Breast epithelium (tissue), 4 donors: ENCODE measurements at regions of chr1 and their contacts with region 1.

Region 1: GRCh38 chr1:161305867-161306519 is 3.8 kb downstream of the MPZ start:
- DNase-seq: peak; percentile 74 to 75
- H3K4me3 ChIP-seq: peak overlapping the region; percentile 57 to 88 (median 82)
- H3K27ac ChIP-seq: peak overlapping the region; percentile 69 to 80
- H3K4me1 ChIP-seq: peaks cover 2 to 6% of the 10 kb centered on the region in 2 donors
- H3K27me3 ChIP-seq: no peaks in the 10 kb centered on the region
- CTCF ChIP-seq: no peak
- POLR2A ChIP-seq: no peak

Region 2: GRCh38 chr1:160629286-160630210 is 676.4 kb before region 1 on chr1:
- intact Hi-C with region 1: no loop called
- DNase-seq: no peak
- H3K4me3 ChIP-seq: no peak overlapping the region
- H3K27ac ChIP-seq: no peak overlapping the region
- H3K4me1 ChIP-seq: no peaks in the 10 kb centered on the region
- H3K27me3 ChIP-seq: no peaks in the 10 kb centered on the region
- CTCF ChIP-seq: no peak
- POLR2A ChIP-seq: no peak

Region 3: DNA sequence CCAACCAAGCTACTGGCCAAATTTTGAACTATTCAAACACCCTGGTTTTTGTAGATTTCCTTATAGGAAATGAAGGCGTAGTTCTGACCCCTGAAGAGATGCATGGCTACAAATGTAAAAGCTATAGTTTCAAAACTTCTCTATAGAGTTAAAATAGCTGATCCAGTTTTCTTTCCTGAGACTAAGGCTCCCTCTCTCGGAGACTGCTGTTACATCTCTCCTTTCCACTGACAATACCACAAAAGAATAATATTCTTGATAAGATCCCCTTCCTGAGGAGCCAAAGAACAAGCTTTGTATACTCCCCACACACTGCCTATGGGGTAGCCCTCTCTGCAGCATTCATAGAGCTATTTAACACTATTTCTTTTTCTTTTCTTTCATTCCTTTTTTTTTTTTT is 68.4 kb after region 1 on chr1:
- intact Hi-C with region 1: loop called (anchors 10 kb)
- DNase-seq: no peak
- H3K4me3 ChIP-seq: no peak overlapping the region
- H3K27ac ChIP-seq: no peak overlapping the region
- H3K4me1 ChIP-seq: no peaks in the 10 kb centered on the region
- H3K27me3 ChIP-seq: no peaks in the 10 kb centered on the region
- CTCF ChIP-seq: no peak
- POLR2A ChIP-seq: no peak